ENCODE measurements at regions of chr11 and their contacts with region 1.

Region 1: GRCh38 chr11:13955971-13956421 is 6.5 kb upstream of the SPON1 start:
- DNase-seq: peak; percentile 55 to 69
- H3K4me3 ChIP-seq: no peak overlapping the region
- H3K4me3 Mint-ChIP-seq: no peak overlapping the region
- H3K27ac Mint-ChIP-seq: no peak overlapping the region
- H3K4me1 ChIP-seq: no peaks in the 10 kb centered on the region
- H3K4me1 Mint-ChIP-seq: no peaks in the 10 kb centered on the region
- H3K27me3 ChIP-seq: no peaks in the 10 kb centered on the region
- H3K27me3 Mint-ChIP-seq: peaks cover 3% of the 10 kb centered on the region
- CTCF ChIP-seq: peak; percentile 87 to 97

Region 2: GRCh38 chr11:13772223-13773046 is 183.6 kb before region 1 on chr11:
- CTCF ChIA-PET with region 1: interaction called, 3 read pairs
- POLR2A ChIA-PET with region 1: no interaction called
- intact Hi-C with region 1: loop called (anchors 2 kb)
- DNase-seq: peak in 1 of 2 experiments; percentile 70
- H3K4me3 ChIP-seq: no peak overlapping the region
- H3K4me3 Mint-ChIP-seq: no peak overlapping the region
- H3K27ac Mint-ChIP-seq: no peak overlapping the region
- H3K4me1 ChIP-seq: 0 out of 2 replicates have a peak, but pooled peaks cover 8% of the 10 kb centered on the region
- H3K4me1 Mint-ChIP-seq: no peaks in the 10 kb centered on the region
- H3K27me3 ChIP-seq: no peaks in the 10 kb centered on the region
- H3K27me3 Mint-ChIP-seq: peaks cover 2% of the 10 kb centered on the region
- CTCF ChIP-seq: peak; percentile 53 to 75

Region 3: DNA sequence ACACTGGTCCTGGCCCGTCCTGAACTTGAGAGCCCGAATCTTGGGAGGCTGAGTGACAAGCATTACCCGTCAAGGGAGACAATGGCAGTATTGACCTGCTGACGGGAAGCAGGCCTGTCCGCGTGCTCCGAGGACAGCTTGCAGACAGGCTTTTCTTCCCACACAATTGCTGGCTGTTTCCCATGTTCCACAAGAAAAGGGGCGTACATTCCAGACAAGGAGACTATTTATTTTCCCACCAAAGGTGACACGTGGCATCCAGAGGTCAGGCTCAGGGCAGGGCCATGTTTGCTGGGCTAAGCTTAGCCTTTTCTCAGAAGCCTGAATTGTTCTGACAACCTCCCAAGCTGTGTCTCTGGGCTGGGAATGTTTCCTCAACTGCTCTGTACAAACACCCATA is 80.4 kb before region 1 on chr11:
- CTCF ChIA-PET with region 1: no interaction called
- POLR2A ChIA-PET with region 1: no interaction called
- intact Hi-C with region 1: loop called (anchors 5 kb)
- DNase-seq: peak; percentile 44 to 64
- H3K4me3 ChIP-seq: no peak overlapping the region
- H3K4me3 Mint-ChIP-seq: no peak overlapping the region
- H3K27ac Mint-ChIP-seq: no peak overlapping the region
- H3K4me1 ChIP-seq: peaks cover 9% of the 10 kb centered on the region; the same call in 1 of the 2 replicates
- H3K4me1 Mint-ChIP-seq: no peaks in the 10 kb centered on the region
- H3K27me3 ChIP-seq: no peaks in the 10 kb centered on the region
- H3K27me3 Mint-ChIP-seq: peaks cover 12% of the 10 kb centered on the region
- CTCF ChIP-seq: no peak

Region 4: GRCh38 chr11:13931356-13931755 is 24.6 kb before region 1 on chr11:
- CTCF ChIA-PET with region 1: no interaction called
- POLR2A ChIA-PET with region 1: no interaction called
- intact Hi-C with region 1: no loop called
- DNase-seq: no peak
- H3K4me3 ChIP-seq: no peak overlapping the region
- H3K4me3 Mint-ChIP-seq: no peak overlapping the region
- H3K27ac Mint-ChIP-seq: no peak overlapping the region
- H3K4me1 ChIP-seq: no peaks in the 10 kb centered on the region; the same call in 1 of the 2 replicates
- H3K4me1 Mint-ChIP-seq: peaks cover 6% of the 10 kb centered on the region
- H3K27me3 ChIP-seq: no peaks in the 10 kb centered on the region; the same call in 1 of the 2 replicates
- H3K27me3 Mint-ChIP-seq: no peaks in the 10 kb centered on the region
- CTCF ChIP-seq: no peak

Region 5: DNA sequence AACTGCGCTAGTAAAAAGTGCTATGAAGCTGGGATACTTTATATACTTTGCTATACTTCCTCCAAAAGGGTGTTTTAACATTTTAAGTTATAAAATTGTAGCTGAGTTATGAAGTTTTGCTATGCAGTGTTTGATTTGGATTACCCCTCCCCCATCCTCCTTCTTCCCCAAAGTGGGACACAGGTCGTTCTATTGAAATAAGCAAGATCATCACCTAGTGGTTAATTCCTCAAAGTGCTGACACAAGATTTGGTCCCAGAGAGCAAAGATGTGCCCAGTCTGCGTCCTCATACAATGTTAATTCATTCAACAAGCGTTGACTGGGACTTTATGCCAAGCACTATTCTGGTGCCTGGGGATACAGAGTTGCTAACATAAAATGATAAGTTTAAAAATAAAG is 85.0 kb after region 1 on chr11:
- CTCF ChIA-PET with region 1: no interaction called
- POLR2A ChIA-PET with region 1: no interaction called
- intact Hi-C with region 1: loop called (anchors 1 kb)
- DNase-seq: peak in 1 of 2 experiments; percentile 34
- H3K4me3 ChIP-seq: no peak overlapping the region
- H3K4me3 Mint-ChIP-seq: no peak overlapping the region
- H3K27ac Mint-ChIP-seq: no peak overlapping the region
- H3K4me1 ChIP-seq: peaks cover 15% of the 10 kb centered on the region
- H3K4me1 Mint-ChIP-seq: no peaks in the 10 kb centered on the region
- H3K27me3 ChIP-seq: no peaks in the 10 kb centered on the region
- H3K27me3 Mint-ChIP-seq: no peaks in the 10 kb centered on the region
- CTCF ChIP-seq: peak; percentile 43 to 67

Region 6: DNA sequence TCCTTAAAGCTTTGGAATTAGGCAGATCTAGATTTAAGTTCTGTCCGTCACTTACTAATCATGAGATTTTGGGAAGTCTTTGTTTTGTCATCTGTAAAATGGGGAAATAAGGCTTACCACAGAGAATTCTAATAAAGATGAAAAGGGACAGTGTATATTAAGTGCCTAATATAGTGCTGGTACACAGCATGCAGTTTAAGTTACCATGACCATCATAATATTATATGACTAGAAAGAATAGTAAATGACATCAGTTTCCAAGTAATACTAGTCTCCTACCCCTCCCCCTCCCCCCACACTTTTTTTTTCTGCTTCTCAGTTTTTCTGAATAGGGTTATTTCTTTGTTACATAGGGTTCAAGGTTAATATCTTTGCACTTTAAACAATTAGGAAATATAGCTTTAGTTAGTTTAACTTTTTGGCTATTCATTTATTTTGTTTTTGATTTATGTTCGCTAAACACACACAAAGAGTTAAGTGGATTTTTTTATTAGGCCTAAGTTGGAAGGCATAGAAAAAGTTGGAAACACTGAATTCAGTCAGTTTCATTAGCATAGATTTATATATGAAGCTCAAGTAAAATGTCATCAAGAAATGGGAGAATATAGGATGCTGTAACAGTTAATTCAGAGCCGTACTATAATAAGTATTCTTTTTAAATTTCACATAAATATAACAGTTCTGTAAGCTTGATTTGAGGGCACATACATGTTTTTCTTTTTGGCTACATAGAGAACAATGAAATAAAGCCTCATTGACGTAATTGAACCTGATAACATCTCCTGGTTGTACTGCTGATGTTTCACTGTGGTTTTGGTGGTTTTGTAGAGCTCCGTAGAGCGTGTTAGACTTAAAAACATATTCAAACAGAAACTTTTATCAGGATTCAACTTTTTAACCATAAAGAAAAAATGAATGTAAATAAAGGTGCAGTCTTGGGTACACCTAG is 808.9 kb after region 1 on chr11:
- CTCF ChIA-PET with region 1: no interaction called
- POLR2A ChIA-PET with region 1: no interaction called
- intact Hi-C with region 1: no loop called
- DNase-seq: no peak
- H3K4me3 ChIP-seq: no peak overlapping the region
- H3K4me3 Mint-ChIP-seq: no peak overlapping the region
- H3K27ac Mint-ChIP-seq: no peak overlapping the region
- H3K4me1 ChIP-seq: no peaks in the 10 kb centered on the region
- H3K4me1 Mint-ChIP-seq: no peaks in the 10 kb centered on the region
- H3K27me3 ChIP-seq: no peaks in the 10 kb centered on the region
- H3K27me3 Mint-ChIP-seq: no peaks in the 10 kb centered on the region
- CTCF ChIP-seq: no peak